Testis (tissue), 5 donors: ENCODE measurements at regions of chr11 and their contacts with region 1.

Region 1: GRCh38 chr11:77994412-77995362 is at the start of gene INTS4:
- DNase-seq: peak; percentile 99
- H3K4me3 ChIP-seq: peak within 1 kb of the TSS; percentile 66 to 76
- H3K27ac ChIP-seq: peak within 1 kb of the TSS; percentile 50 to 80
- H3K4me1 ChIP-seq: peaks cover 3% of the 10 kb centered on the region
- H3K27me3 ChIP-seq: no peaks in the 10 kb centered on the region
- CTCF ChIP-seq: peak in 2 of 3 experiments; percentile 7 to 23
- POLR2A ChIP-seq: no peak
- total RNA-seq, gene INTS4: 37.4 to 48.2 TPM

Region 2: DNA sequence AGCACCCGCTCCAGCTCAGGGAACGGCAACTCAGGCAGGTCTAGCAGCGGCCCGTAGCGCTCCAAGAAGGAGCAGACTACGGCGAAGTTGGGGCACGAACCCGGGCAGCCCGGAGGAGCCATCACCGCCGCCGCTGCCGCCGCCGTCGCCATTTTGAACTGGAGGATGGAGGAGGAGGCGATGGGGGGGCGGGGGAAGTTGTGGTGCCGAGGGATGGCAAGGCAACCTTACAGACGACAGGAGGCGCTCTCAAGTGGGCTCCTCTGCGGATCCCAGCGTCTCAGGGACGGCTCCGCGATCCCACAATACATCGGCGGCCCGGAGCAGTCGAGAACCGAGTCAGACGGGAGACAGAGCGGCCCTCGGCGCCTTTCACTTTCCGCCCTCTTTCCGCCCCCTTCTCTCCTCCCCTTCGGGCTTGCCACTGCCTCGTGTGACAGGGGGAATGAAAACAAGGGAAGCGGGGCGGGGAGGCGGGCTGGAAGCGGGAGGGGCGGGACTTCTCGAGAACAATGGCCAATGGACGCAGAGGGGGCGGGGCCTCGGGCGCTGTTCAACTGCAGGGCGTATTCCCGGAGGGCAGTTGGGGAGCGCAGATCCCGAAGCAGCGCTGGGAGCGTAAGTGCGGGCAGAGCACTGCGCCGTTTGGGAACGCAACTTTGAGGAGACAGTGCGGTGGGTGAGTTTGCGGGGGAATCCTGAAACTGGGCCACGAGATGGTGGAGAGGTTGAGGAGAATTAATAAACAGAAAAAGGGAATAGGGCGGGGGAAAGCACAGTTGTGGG is 173.9 kb before region 1 on chr11 and contains the starts of genes AAMDC and RSF1:
- intact Hi-C with region 1: loop called (anchors 10 kb)
- DNase-seq: peak; percentile 100
- H3K4me3 ChIP-seq: peak within 1 kb of the TSS; percentile 84 to 100
- H3K27ac ChIP-seq: peak within 1 kb of the TSS; percentile 94 to 98
- H3K4me1 ChIP-seq: peaks cover 18% of the 10 kb centered on the region
- H3K27me3 ChIP-seq: no peaks in the 10 kb centered on the region
- CTCF ChIP-seq: peak; percentile 22 to 68 (median 60)
- POLR2A ChIP-seq: peak; percentile 64
- total RNA-seq, gene AAMDC: 20.2 to 22.0 TPM
- total RNA-seq, gene RSF1: 94.6 to 168 TPM